ENCODE measurements at regions of chr12 and their contacts with region 1.

Region 1: DNA sequence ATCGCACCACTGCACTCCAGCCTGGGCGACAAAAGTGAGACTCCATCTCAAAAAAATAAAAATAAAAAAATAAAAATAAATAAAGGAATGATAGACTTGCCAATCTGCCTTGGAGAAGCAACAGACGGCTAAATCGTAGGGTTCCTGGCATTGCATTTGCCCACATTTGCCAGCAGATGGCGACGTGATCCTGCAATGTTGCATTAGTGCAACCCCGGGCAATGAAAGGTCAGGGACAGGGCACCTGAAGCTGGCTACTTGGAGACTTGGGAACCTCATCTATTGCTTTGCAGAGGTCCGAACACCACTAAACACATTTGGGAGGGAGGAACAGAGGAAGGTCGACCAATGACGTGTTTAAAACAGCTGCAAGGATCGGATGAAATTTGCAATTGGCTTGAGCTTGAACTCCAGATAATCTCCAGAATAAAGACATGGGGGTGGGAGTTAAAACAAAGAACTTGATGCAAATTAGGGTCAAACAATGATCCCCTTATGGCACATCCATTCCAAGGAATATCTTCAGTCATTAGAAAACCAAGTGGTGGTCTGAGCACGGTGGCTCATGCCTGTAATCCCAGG is 34.6 kb downstream of the SPRING1 start:
- DNase-seq: peak; percentile 51
- ATAC-seq: peak; percentile 93
- H3K4me3 ChIP-seq: no peak overlapping the region
- H3K27ac ChIP-seq: no peak overlapping the region
- H3K4me1 ChIP-seq: peaks cover 0 to 4% of the 10 kb centered on the region in 2 experiments; a peak in 1 of 4 replicates
- H3K27me3 ChIP-seq: no peaks in the 10 kb centered on the region
- CTCF ChIP-seq: peak; percentile 87 to 90 (median 87)
- POLR2A ChIP-seq: no peak
- RAD21 ChIP-seq: peak; percentile 95

Region 2: GRCh38 chr12:116882742-116883141 is 179.4 kb after region 1 on chr12:
- CTCF ChIA-PET with region 1: interaction called, 15 read pairs
- POLR2A ChIA-PET with region 1: no interaction called
- RAD21 ChIA-PET with region 1: interaction called in 1 of 2 experiments, 3 read pairs
- intact Hi-C with region 1: loop called (anchors 2 kb)
- DNase-seq: no peak
- ATAC-seq: no peak
- H3K4me3 ChIP-seq: no peak overlapping the region
- H3K27ac ChIP-seq: no peak overlapping the region
- H3K4me1 ChIP-seq: peaks cover 14 to 32% of the 10 kb centered on the region in 2 experiments; a peak in 3 of 4 replicates
- H3K27me3 ChIP-seq: no peaks in the 10 kb centered on the region
- CTCF ChIP-seq: peak in 2 of 3 experiments; percentile 43 to 74; a peak in 4 of 6 replicates
- POLR2A ChIP-seq: no peak
- RAD21 ChIP-seq: peak; percentile 83

Region 3: GRCh38 chr12:116955382-116956021 is 252.2 kb after region 1 on chr12:
- CTCF ChIA-PET with region 1: interaction called, 18 read pairs
- POLR2A ChIA-PET with region 1: no interaction called
- RAD21 ChIA-PET with region 1: no interaction called
- intact Hi-C with region 1: loop called (anchors 1 kb)
- DNase-seq: peak; percentile 45
- ATAC-seq: peak; percentile 69
- H3K4me3 ChIP-seq: no peak overlapping the region
- H3K27ac ChIP-seq: no peak overlapping the region
- H3K4me1 ChIP-seq: no peaks in the 10 kb centered on the region; a peak in 1 of 4 replicates
- H3K27me3 ChIP-seq: no peaks in the 10 kb centered on the region
- CTCF ChIP-seq: peak; percentile 12 to 53 (median 33); a peak in 3 of 6 replicates
- POLR2A ChIP-seq: no peak
- RAD21 ChIP-seq: peak; percentile 82

Region 4: GRCh38 chr12:117025481-117026151 is 322.3 kb after region 1 on chr12:
- CTCF ChIA-PET with region 1: interaction called, 4 read pairs
- POLR2A ChIA-PET with region 1: no interaction called
- RAD21 ChIA-PET with region 1: no interaction called
- intact Hi-C with region 1: loop called (anchors 2 kb)
- DNase-seq: peak; percentile 29
- ATAC-seq: peak; percentile 98
- H3K4me3 ChIP-seq: no peak overlapping the region
- H3K27ac ChIP-seq: no peak overlapping the region
- H3K4me1 ChIP-seq: no peaks in the 10 kb centered on the region
- H3K27me3 ChIP-seq: no peaks in the 10 kb centered on the region
- CTCF ChIP-seq: peak; percentile 88 to 98 (median 88)
- POLR2A ChIP-seq: no peak
- RAD21 ChIP-seq: peak; percentile 95

Region 5: DNA sequence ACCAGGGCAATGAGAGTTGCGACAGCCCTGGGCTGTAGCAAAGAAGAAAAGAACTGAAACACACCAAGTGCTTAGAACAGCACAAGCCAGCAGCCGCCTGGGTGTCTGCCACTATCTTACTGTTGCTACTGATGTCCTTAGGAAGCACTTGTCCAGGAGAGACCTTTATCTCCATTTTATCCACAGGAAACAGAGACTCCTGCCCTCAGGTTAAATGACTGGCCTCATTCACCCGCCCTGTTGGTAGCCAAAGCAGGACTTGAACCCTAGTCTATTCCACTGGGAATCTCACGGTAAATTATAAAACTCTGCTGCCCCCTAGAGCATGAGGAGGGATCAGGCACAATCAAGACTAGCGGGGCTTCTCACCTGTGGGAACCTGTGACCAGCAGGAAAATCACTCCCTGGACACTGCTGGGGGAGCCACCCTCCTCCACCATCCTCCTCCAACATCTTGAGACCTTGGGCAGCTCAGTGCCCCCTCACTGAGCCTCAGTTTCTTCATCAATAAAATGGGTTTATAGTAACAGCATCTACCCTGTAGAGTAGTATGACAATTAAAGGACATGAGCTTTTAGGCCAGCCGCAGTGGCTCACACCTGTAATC is 416.4 kb after region 1 on chr12:
- CTCF ChIA-PET with region 1: interaction called, 8 read pairs
- POLR2A ChIA-PET with region 1: no interaction called
- RAD21 ChIA-PET with region 1: no interaction called
- intact Hi-C with region 1: loop called (anchors 1 kb)
- DNase-seq: peak; percentile 51
- ATAC-seq: peak; percentile 96
- H3K4me3 ChIP-seq: no peak overlapping the region
- H3K27ac ChIP-seq: no peak overlapping the region
- H3K4me1 ChIP-seq: peaks cover 3 to 4% of the 10 kb centered on the region in 2 experiments; a peak in 2 of 4 replicates
- H3K27me3 ChIP-seq: no peaks in the 10 kb centered on the region
- CTCF ChIP-seq: peak; percentile 81 to 93 (median 87)
- POLR2A ChIP-seq: no peak
- RAD21 ChIP-seq: peak; percentile 94

Region 6: GRCh38 chr12:117155278-117156060 is 452.2 kb after region 1 on chr12:
- CTCF ChIA-PET with region 1: no interaction called
- POLR2A ChIA-PET with region 1: no interaction called
- RAD21 ChIA-PET with region 1: no interaction called
- intact Hi-C with region 1: loop called (anchors 10 kb)
- DNase-seq: peak; percentile 95
- ATAC-seq: peak; percentile 99
- H3K4me3 ChIP-seq: no peak overlapping the region
- H3K27ac ChIP-seq: no peak overlapping the region
- H3K4me1 ChIP-seq: no peaks in the 10 kb centered on the region
- H3K27me3 ChIP-seq: no peaks in the 10 kb centered on the region
- CTCF ChIP-seq: peak; percentile 93 to 99 (median 98)
- POLR2A ChIP-seq: no peak
- RAD21 ChIP-seq: peak; percentile 56

Measured in HCT116 (cell line).